ENCODE measurements at regions of chr6 and their contacts with region 1.

Region 1: DNA sequence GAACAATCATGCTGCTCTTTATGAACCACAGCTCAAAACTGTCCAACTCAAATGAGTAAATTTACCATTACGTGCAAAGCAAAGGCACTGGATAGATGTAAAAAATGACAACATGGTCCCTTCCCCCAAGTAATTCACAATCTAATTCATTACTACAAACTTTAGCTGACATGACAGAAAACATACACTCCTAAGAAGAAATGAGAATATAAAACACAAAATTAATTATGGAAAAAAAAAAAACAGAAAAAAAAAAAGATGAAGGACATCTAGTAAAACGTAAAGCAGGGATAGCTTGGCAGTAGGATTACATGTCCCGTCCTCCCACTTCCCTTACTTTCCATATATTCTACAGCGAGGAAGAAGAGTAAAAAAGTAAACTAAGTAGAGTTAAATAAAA is 5.7 kb downstream of the TUBE1 start:
- DNase-seq: no peak
- ATAC-seq: no peak
- H3K4me3 ChIP-seq: no peak overlapping the region
- H3K27ac ChIP-seq: no peak overlapping the region
- H3K4me1 ChIP-seq: peaks cover 0 to 25% (median 9%) of the 10 kb centered on the region in 12 donors
- H3K27me3 ChIP-seq: no peaks in the 10 kb centered on the region
- CTCF ChIP-seq: no peak
- POLR2A ChIP-seq: no peak

Region 2: DNA sequence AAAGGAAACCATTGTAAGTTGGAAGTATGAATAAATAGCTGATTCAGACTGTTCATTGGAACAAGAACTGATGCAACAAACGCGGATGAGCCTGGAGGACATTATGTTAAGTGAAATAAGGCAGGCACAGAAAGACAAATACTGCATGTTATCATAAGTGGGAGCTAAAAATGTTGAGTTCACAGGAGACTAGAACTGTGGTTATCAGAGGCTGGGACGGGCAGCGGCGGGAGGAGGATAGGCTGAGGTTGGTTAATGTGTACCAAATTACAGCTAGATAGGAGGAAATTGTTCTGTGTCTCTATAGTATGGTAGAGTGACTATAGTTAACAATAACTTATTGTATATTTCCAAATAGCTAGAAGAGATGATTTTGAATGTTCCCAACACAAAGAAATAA is 46.6 kb after region 1 on chr6:
- intact Hi-C with region 1: loop called in 1 of 10 experiments (anchors 5 kb)
- DNase-seq: no peak
- ATAC-seq: peak in 3 of 4 donors; percentile 29 to 68 (median 42)
- H3K4me3 ChIP-seq: no peak overlapping the region
- H3K27ac ChIP-seq: no peak overlapping the region
- H3K4me1 ChIP-seq: peaks cover 0 to 4% (median 0%) of the 10 kb centered on the region in 12 donors
- H3K27me3 ChIP-seq: no peaks in the 10 kb centered on the region
- CTCF ChIP-seq: no peak
- POLR2A ChIP-seq: no peak